Heart left ventricle (tissue), 16 donors: ENCODE measurements at regions of chr1 and their contacts with region 1.

Region 1: DNA sequence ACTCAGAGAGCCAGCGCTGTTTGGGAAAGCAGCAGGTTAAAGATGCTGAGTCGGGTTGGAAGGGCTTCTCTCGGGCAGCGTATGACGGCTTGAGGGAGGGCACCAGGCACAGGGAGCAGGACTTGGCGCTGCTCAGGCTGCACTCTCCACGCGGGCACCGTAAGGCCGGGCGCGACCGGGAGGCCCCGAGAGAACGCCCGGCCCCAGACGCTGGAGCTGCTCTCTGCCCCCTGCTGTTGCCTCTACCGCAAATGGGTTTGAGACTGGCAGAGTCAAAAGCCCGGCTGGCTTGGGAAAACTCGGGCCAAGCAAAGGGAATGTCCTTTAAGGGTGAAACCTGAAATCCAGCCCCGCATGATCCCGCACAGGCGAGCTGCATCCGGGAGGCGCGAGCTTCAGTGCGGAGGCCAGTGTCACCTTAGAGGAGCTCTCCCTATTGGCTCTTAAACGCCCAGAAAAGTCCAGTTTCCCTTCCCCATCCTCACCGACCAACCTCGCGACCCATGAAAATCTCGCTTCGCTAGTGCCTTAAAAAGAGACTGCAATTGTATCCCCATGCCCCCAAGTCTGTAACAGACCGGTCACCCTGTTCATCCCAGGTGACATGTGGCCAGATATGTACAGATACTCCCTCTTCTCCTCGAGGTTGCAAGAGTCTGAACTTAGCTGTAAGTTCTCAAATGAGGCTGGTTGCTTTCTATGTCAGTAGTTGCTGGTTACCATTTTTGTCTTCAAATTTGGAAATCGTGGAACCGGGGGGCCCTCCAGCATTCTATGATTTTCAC is 1.1 kb downstream of the PRRX1 start:
- DNase-seq: peak in 4 of 5 donors; percentile 46 to 75 (median 62)
- ATAC-seq: peak; percentile 37 to 75 (median 72)
- H3K4me3 ChIP-seq: peak overlapping the region; percentile 49 to 93 (median 79)
- H3K27ac ChIP-seq: peak overlapping the region; percentile 58 to 98 (median 94)
- H3K4me1 ChIP-seq: peaks cover 0 to 50% (median 3%) of the 10 kb centered on the region in 12 donors
- H3K27me3 ChIP-seq: peaks cover 0 to 82% (median 9%) of the 10 kb centered on the region in 9 donors
- CTCF ChIP-seq: peak in 6 of 12 donors; percentile 6 to 44 (median 30)
- POLR2A ChIP-seq: peak in 1 of 2 donors; percentile 28

Region 2: GRCh38 chr1:170010443-170010842 is 654.6 kb before region 1 on chr1:
- intact Hi-C with region 1: loop called in 1 of 10 experiments (anchors 5 kb)
- DNase-seq: peak in 4 of 5 donors; percentile 25 to 40 (median 32)
- ATAC-seq: no peak
- H3K4me3 ChIP-seq: no peak overlapping the region
- H3K27ac ChIP-seq: no peak overlapping the region
- H3K4me1 ChIP-seq: no peaks in the 10 kb centered on the region
- H3K27me3 ChIP-seq: no peaks in the 10 kb centered on the region
- CTCF ChIP-seq: peak; percentile 7 to 66 (median 50)
- POLR2A ChIP-seq: no peak

Region 3: DNA sequence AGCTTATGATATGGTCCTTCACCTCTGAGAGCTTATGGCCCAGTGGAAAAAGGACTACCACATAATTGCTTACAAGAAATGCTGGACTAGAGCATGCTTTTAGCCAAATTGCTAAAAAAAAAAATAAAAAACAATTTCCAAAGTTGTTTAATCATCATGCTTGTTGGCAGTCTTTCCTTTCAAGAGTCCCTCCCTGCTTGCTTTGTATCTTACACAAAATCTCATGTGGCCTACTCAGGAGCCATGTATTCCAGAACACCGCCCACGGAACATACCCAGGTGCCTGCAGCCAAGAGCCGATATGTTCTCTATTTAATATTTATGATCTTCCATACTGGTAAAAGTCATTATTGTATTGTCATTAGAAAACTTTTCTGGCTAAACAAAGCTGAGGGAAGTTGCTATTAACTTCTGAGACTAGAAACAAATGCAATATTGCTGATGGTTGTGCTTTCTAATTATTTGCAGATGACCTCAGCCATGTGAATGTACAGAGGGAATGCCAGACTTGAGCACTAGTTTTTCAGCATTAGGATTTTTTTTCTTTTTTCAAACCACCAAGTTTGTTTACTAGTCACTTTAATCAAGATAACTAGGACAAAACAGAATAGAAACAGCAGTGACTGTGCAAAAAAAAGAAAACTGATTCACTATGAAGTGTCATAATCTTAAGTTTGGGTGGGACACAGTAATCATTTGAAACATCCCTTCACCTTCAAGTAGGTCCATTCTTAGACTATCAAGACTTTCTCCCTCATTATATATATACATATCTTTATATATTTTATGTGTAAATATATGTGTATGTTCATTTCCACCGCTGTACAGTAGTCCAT is 262.3 kb before region 1 on chr1:
- intact Hi-C with region 1: loop called in 1 of 10 experiments (anchors 10 kb)
- DNase-seq: no peak
- ATAC-seq: peak in 3 of 4 donors; percentile 41 to 61 (median 54)
- H3K4me3 ChIP-seq: no peak overlapping the region
- H3K27ac ChIP-seq: peak overlapping the region in 5 of 12 donors; percentile 11 to 32 (median 22)
- H3K4me1 ChIP-seq: no peaks in the 10 kb centered on the region
- H3K27me3 ChIP-seq: no peaks in the 10 kb centered on the region
- CTCF ChIP-seq: no peak
- POLR2A ChIP-seq: no peak

Region 4: GRCh38 chr1:170545476-170545875 is 119.5 kb before region 1 on chr1:
- intact Hi-C with region 1: loop called in 1 of 10 experiments (anchors 5 kb)
- DNase-seq: no peak
- ATAC-seq: peak in 1 of 4 donors; percentile 34
- H3K4me3 ChIP-seq: no peak overlapping the region
- H3K27ac ChIP-seq: no peak overlapping the region
- H3K4me1 ChIP-seq: no peaks in the 10 kb centered on the region
- H3K27me3 ChIP-seq: no peaks in the 10 kb centered on the region
- CTCF ChIP-seq: no peak
- POLR2A ChIP-seq: no peak

Region 5: GRCh38 chr1:170765712-170766330 is 100.8 kb after region 1 on chr1:
- intact Hi-C with region 1: loop called in 6 of 10 experiments (anchors 5 to 10 kb)
- DNase-seq: no peak
- ATAC-seq: peak in 3 of 4 donors; percentile 45 to 71 (median 49)
- H3K4me3 ChIP-seq: no peak overlapping the region
- H3K27ac ChIP-seq: no peak overlapping the region
- H3K4me1 ChIP-seq: peaks cover 0 to 6% (median 0%) of the 10 kb centered on the region in 12 donors
- H3K27me3 ChIP-seq: no peaks in the 10 kb centered on the region
- CTCF ChIP-seq: peak; percentile 33 to 72 (median 56)
- POLR2A ChIP-seq: no peak

Region 6: DNA sequence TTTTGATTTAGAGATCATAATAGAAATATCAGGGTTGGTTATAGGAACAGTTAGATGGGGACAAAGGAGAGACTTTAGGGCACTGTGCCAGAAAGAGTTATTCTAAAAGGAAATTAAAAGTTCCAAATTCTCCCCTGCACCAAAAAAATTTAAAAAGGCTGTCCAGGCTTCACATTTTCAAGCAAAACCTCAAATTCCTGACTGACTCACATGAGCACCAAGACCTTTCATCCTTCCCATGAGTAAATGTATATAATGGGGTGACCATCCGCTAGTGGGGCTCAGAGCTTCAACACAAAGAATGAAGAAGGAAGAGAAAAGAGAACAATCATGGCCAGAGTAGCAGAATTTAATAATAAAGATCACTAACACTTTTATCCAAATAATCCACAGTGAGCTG is 138.7 kb after region 1 on chr1:
- intact Hi-C with region 1: no loop called
- DNase-seq: no peak
- ATAC-seq: no peak
- H3K4me3 ChIP-seq: no peak overlapping the region
- H3K27ac ChIP-seq: no peak overlapping the region
- H3K4me1 ChIP-seq: no peaks in the 10 kb centered on the region
- H3K27me3 ChIP-seq: no peaks in the 10 kb centered on the region
- CTCF ChIP-seq: no peak
- POLR2A ChIP-seq: no peak